Sigmoid colon (tissue), 7 donors: ENCODE measurements at regions of chr3 and their contacts with region 1.

Region 1: GRCh38 chr3:197942956-197943556 is 6.9 kb upstream of the RPL35A start:
- DNase-seq: no peak
- H3K4me3 ChIP-seq: no peak overlapping the region
- H3K27ac ChIP-seq: no peak overlapping the region
- H3K4me1 ChIP-seq: no peaks in the 10 kb centered on the region
- H3K27me3 ChIP-seq: no peaks in the 10 kb centered on the region
- CTCF ChIP-seq: peak; percentile 24 to 69 (median 58)
- EP300 ChIP-seq: no peak
- POLR2A ChIP-seq: no peak

Region 2: GRCh38 chr3:197906023-197906849 is 36.8 kb before region 1 on chr3:
- intact Hi-C with region 1: loop called (anchors 5 kb)
- DNase-seq: peak; percentile 95
- H3K4me3 ChIP-seq: no peak overlapping the region
- H3K27ac ChIP-seq: peak overlapping the region in 1 of 4 donors; percentile 15
- H3K4me1 ChIP-seq: peaks cover 0 to 10% (median 5%) of the 10 kb centered on the region in 4 donors
- H3K27me3 ChIP-seq: no peaks in the 10 kb centered on the region
- CTCF ChIP-seq: peak; percentile 81 to 90 (median 86)
- EP300 ChIP-seq: no peak
- POLR2A ChIP-seq: no peak

Region 3: DNA sequence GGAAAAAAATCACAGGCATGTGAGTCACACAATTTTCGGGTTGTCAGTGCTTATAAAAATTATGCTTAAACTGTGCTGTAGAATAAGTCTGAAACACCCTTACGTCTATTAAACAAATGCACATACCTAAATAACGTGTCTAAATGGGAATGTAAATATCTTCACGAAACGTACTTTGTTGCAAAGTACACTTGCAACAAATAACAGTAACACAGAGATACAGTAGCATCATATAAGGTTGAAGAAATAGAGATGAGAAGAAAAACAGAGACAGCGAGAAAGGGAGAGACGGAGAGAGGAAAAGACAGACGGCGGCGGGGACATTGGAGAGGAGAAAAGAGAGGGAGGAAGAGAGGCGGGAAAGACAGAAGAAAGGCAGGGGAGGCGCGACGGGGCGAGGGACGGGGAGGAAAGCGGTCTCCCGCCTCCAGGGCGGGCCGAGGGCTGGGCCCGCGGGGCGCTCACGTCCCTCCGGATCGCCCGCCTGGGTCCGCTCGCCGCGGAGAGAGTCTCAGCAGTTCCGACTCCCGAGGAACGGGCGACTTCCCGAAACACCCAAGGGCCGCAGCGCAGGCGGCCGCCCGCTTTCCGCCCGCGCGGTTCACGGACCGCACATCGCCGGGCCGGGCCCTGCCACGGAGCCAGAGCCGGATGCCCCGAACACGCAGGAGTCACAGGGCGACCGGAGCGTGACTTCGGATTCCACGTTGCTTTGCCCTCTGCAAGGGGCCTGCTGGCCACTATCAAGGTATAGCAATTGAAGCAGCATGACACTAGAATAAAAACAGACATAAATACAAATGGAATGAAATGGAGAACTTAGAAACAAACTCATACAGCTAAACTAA is 170.4 kb after region 1 on chr3:
- intact Hi-C with region 1: no loop called
- DNase-seq: no peak
- H3K4me3 ChIP-seq: peak overlapping the region in 3 of 4 donors; percentile 4 to 31 (median 7)
- H3K27ac ChIP-seq: no peak overlapping the region
- H3K4me1 ChIP-seq: peaks cover 0 to 5% (median 3%) of the 10 kb centered on the region in 4 donors
- H3K27me3 ChIP-seq: peaks cover 7 to 68% (median 43%) of the 10 kb centered on the region in 3 donors
- CTCF ChIP-seq: no peak
- EP300 ChIP-seq: no peak
- POLR2A ChIP-seq: no peak